ENCODE measurements at regions of chr4 and their contacts with region 1.

Region 1: GRCh38 chr4:101806914-101807313 is 16.4 kb downstream of the BANK1 start:
- DNase-seq: no peak
- ATAC-seq: peak; percentile 87
- H3K4me3 Mint-ChIP-seq: peak overlapping the region; percentile 73
- H3K27ac Mint-ChIP-seq: peak overlapping the region; percentile 95
- H3K4me1 Mint-ChIP-seq: peaks cover 83% of the 10 kb centered on the region
- H3K27me3 Mint-ChIP-seq: no peaks in the 10 kb centered on the region
- CTCF ChIP-seq: no peak

Region 2: DNA sequence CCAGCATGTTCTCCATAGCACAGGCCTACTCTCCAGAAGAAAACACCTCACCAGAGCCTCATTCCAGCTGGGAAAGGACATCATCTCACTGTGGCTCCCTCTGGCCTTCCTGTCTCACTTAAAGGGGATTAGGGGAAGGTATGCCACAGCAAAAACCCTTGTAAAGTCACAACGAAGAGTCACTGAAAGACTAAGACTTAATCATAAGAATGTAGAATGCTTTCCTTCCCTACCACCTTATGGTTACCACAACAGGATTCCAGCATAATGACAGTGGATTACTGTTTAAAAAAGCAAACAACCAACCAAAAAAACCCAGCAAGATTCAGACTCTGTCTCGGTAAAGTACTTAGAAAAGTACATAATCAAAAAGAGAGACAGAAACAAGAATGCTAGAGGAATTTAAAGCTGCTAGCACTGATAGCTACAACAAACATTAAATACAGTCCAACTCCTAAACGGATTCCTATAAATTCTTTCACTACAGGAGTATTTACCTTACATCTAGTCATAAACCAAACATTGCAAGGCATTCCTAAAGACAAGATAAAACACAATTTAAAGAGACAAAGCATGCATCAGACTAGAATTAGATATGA is 58.7 kb after region 1 on chr4:
- CTCF ChIA-PET with region 1: no interaction called
- POLR2A ChIA-PET with region 1: interaction called, 7 read pairs
- intact Hi-C with region 1: loop called (anchors 2 kb)
- DNase-seq: no peak
- ATAC-seq: no peak
- H3K4me3 Mint-ChIP-seq: no peak overlapping the region
- H3K27ac Mint-ChIP-seq: peak overlapping the region; percentile 66
- H3K4me1 Mint-ChIP-seq: peaks cover 68% of the 10 kb centered on the region
- H3K27me3 Mint-ChIP-seq: no peaks in the 10 kb centered on the region
- CTCF ChIP-seq: no peak

Measured in activated B cell treated with CpG ODN at 0.5 μM for 24 hours (primary cell).